GM12878 (cell line): ENCODE measurements at regions of chr12 and their contacts with region 1.

Region 1: DNA sequence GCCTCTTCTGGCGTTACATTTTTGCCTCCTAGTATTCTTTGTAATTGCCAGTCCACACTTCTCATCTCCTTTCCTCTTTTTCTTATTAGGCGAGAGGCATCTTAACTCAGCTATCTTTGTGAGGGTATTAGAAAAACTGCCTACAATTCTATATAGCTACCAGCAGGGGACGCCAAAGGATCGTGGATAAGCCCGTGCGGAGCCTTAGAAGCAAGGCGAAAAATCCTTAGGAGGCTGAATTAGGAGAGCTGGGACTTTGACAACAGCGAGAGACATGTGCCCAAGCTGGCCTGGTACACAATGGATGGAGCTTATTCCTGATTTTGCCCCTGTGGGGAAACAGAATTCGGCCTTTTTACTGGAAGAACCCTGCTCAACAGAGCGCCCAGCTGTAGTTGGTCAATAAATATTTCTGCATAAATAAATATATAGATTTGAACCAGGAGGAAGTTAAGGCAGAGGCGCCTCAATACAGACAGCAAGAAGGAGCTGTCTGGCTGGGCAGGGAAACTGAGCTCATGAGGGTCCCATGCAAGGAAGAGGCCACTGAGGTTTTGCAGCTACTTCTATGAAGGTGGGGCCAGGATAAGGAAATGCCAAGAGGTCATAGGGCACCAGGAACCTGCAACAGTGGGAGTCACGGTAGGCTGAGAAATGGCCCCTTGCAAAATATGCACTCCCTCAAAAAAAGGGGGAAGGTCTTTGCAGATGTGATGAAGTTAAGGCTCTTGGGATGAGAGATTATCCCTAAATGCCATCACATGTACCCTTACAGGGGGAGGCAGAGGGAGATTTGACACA is 14.6 kb upstream of the RBM19 start:
- DNase-seq: no peak
- ATAC-seq: peak; percentile 87
- H3K4me3 ChIP-seq: no peak overlapping the region
- H3K27ac ChIP-seq: no peak overlapping the region
- H3K4me1 ChIP-seq: no peaks in the 10 kb centered on the region
- H3K27me3 ChIP-seq: no peaks in the 10 kb centered on the region
- CTCF ChIP-seq: peak; percentile 97
- EP300 ChIP-seq: no peak
- POLR2A ChIP-seq: no peak
- RAD21 ChIP-seq: peak; percentile 98

Region 2: DNA sequence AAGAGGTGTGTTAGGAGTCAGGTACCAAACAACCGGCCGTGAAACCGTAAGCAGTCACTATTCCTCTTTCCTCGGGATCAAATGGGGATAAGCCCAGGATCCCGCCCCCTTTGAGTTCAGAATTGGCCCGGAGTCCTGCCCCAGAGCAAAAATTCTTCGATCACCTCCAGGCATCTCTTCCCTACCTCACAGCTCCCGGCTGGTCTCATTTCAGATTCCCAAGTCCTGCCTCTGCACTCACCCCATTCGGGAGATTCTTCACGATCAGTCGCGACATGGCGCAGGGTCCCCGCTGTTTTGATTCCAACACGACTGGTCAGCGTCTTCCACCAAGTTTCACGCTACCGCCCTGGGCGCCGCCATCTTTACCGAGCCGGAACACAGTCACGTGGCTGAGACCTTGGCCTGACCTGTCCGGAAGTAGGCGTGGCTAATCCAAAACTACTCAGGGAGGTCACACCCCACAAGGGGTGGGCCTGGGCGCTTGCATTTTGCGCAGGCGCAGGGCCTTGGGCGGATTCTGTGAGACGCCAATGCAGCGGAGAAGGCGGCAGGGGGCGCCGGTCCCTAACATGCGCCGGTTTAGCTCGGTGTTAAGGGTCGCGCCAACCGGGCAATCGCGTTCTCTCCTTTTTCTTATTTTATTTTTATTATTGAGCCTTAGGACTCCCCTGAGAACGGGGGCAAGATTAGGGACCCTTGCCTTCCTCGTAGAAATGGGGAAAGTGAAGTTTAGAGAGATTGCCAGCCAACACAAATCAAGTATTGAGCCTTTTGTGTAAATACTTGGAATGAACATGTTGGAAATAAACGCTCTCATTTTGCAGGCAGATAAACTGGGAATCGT is 14.6 kb before region 1 on chr12 and contains the start of gene RBM19:
- CTCF ChIA-PET with region 1: interaction called, 45 read pairs
- POLR2A ChIA-PET with region 1: no interaction called
- RAD21 ChIA-PET with region 1: interaction called, 4 read pairs
- SMC1A ChIA-PET with region 1: interaction called, 5 read pairs
- in situ Hi-C with region 1: no loop called
- intact Hi-C with region 1: no loop called
- DNase-seq: peak; percentile 80
- ATAC-seq: peak; percentile 90
- H3K4me3 ChIP-seq: peak within 1 kb of the TSS; percentile 87
- H3K27ac ChIP-seq: peak within 1 kb of the TSS; percentile 66
- H3K4me1 ChIP-seq: peaks cover 15% of the 10 kb centered on the region
- H3K27me3 ChIP-seq: no peaks in the 10 kb centered on the region
- CTCF ChIP-seq: peak; percentile 91 to 98 (median 93); a peak in 5 of 6 replicates
- EP300 ChIP-seq: no peak
- POLR2A ChIP-seq: peak; percentile 91
- RAD21 ChIP-seq: peak; percentile 47
- polyA plus RNA-seq, gene RBM19: 4.2 to 7.8 TPM

Region 3: GRCh38 chr12:114190971-114191370 is 210.2 kb after region 1 on chr12:
- CTCF ChIA-PET with region 1: no interaction called
- POLR2A ChIA-PET with region 1: no interaction called
- RAD21 ChIA-PET with region 1: no interaction called
- SMC1A ChIA-PET with region 1: no interaction called
- in situ Hi-C with region 1: no loop called
- intact Hi-C with region 1: no loop called
- DNase-seq: no peak
- ATAC-seq: no peak
- H3K4me3 ChIP-seq: no peak overlapping the region
- H3K27ac ChIP-seq: no peak overlapping the region
- H3K4me1 ChIP-seq: no peaks in the 10 kb centered on the region
- H3K27me3 ChIP-seq: peaks cover 0 to 3% of the 10 kb centered on the region in 2 experiments; a peak in 2 of 4 replicates
- CTCF ChIP-seq: no peak
- EP300 ChIP-seq: no peak
- POLR2A ChIP-seq: no peak
- RAD21 ChIP-seq: no peak

Region 4: DNA sequence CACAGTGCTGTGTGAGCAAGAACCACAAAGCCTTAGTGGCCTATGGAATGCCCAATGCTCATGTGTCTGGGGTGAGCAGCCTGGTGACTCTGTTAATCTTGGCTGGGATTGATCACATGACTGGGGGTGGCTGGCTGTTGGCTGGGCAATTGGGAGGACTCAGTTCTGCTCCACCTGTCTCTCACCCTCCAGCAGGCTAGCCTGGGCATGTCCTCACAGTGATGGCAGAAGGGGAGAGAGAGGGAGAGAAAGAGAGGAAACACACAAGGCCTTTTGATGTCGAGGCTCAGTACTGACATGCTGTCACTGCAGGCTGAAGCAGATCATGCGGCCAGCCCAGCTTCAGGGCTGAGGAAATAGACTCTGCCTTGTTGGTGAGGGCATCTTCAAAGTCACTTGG is 288.4 kb after region 1 on chr12:
- CTCF ChIA-PET with region 1: no interaction called
- POLR2A ChIA-PET with region 1: no interaction called
- RAD21 ChIA-PET with region 1: no interaction called
- SMC1A ChIA-PET with region 1: no interaction called
- in situ Hi-C with region 1: no loop called
- intact Hi-C with region 1: no loop called
- DNase-seq: no peak
- ATAC-seq: no peak
- H3K4me3 ChIP-seq: no peak overlapping the region
- H3K27ac ChIP-seq: no peak overlapping the region
- H3K4me1 ChIP-seq: no peaks in the 10 kb centered on the region
- H3K27me3 ChIP-seq: no peaks in the 10 kb centered on the region; a peak in 1 of 4 replicates
- CTCF ChIP-seq: no peak
- EP300 ChIP-seq: no peak
- POLR2A ChIP-seq: no peak
- RAD21 ChIP-seq: no peak

Region 5: DNA sequence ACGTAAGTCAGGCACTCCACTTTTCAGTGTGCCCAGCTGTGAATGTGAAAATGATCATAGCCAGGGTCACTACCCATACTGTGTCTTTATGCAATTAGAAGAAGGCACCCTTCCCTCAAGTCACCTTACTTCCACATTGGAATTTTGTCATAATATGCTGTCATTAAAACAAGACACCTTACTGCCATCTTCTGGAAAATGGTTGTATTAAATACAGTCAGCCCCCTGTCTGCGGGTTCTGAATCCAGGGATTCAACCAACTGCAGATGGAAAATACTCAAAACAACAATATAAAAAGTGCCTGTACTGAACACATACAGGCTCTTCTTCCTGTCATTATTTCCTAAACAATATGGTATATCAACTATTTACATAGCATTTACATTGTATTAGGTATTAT is 495.4 kb after region 1 on chr12:
- CTCF ChIA-PET with region 1: interaction called, 11 read pairs
- POLR2A ChIA-PET with region 1: no interaction called
- RAD21 ChIA-PET with region 1: interaction called, 3 read pairs
- SMC1A ChIA-PET with region 1: interaction called, 5 read pairs
- in situ Hi-C with region 1: no loop called
- intact Hi-C with region 1: no loop called
- DNase-seq: no peak
- ATAC-seq: no peak
- H3K4me3 ChIP-seq: no peak overlapping the region
- H3K27ac ChIP-seq: no peak overlapping the region
- H3K4me1 ChIP-seq: no peaks in the 10 kb centered on the region
- H3K27me3 ChIP-seq: peaks cover 4 to 11% of the 10 kb centered on the region in 2 experiments; a peak in 3 of 4 replicates
- CTCF ChIP-seq: no peak; a peak in 1 of 6 replicates
- EP300 ChIP-seq: no peak
- POLR2A ChIP-seq: no peak
- RAD21 ChIP-seq: no peak

Region 6: GRCh38 chr12:114655934-114656749 is 675.4 kb after region 1 on chr12:
- CTCF ChIA-PET with region 1: interaction called, 4 read pairs
- POLR2A ChIA-PET with region 1: no interaction called
- RAD21 ChIA-PET with region 1: no interaction called
- SMC1A ChIA-PET with region 1: no interaction called
- in situ Hi-C with region 1: no loop called
- intact Hi-C with region 1: loop called (anchors 10 kb)
- DNase-seq: no peak
- ATAC-seq: no peak
- H3K4me3 ChIP-seq: no peak overlapping the region
- H3K27ac ChIP-seq: no peak overlapping the region
- H3K4me1 ChIP-seq: no peaks in the 10 kb centered on the region
- H3K27me3 ChIP-seq: no peaks in the 10 kb centered on the region; a peak in 1 of 4 replicates
- CTCF ChIP-seq: no peak
- EP300 ChIP-seq: no peak
- POLR2A ChIP-seq: no peak
- RAD21 ChIP-seq: no peak

Region 7: GRCh38 chr12:115916910-115917668 is 1936.4 kb after region 1 on chr12:
- CTCF ChIA-PET with region 1: interaction called, 18 read pairs
- POLR2A ChIA-PET with region 1: no interaction called
- RAD21 ChIA-PET with region 1: interaction called, 8 read pairs
- SMC1A ChIA-PET with region 1: interaction called, 7 read pairs
- in situ Hi-C with region 1: loop called (anchors 10 kb)
- intact Hi-C with region 1: loop called (anchors 5 kb)
- DNase-seq: no peak
- ATAC-seq: peak; percentile 95
- H3K4me3 ChIP-seq: no peak overlapping the region
- H3K27ac ChIP-seq: no peak overlapping the region
- H3K4me1 ChIP-seq: no peaks in the 10 kb centered on the region
- H3K27me3 ChIP-seq: no peaks in the 10 kb centered on the region
- CTCF ChIP-seq: peak; percentile 85 to 96 (median 93)
- EP300 ChIP-seq: no peak
- POLR2A ChIP-seq: no peak
- RAD21 ChIP-seq: peak; percentile 83